ENCODE measurements at regions of chr15 and their contacts with region 1.

Region 1: GRCh38 chr15:82540055-82540983 is at the start of gene RPS17:
- DNase-seq: peak; percentile 96
- H3K4me3 ChIP-seq: peak within 1 kb of the TSS; percentile 94
- H3K27ac ChIP-seq: peak within 1 kb of the TSS; percentile 74
- H3K4me1 ChIP-seq: peaks cover 25% of the 10 kb centered on the region
- H3K27me3 ChIP-seq: no peaks in the 10 kb centered on the region
- total RNA-seq, gene RPS17: 1,721 and 1,890 TPM in 2 replicates

Region 2: DNA sequence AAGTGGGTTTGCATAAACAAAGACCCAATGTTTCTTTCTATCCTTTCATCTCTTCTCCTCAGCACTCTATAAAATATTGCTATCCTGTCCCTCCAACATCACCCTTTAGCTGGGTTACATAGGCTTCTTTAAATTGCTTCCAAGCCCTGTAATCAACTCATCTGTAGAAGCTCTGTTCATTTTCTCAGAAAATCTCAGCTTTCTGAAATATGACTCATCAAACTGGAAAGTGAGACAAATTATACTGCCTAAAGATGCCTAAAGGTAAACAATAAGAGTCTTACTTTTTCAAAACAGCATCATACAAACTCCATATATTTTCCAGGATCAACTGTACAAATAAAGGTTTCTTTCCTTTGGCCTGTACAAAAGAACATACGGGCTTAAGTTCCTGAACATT is 311.6 kb before region 1 on chr15:
- in situ Hi-C with region 1: no loop called
- DNase-seq: peak; percentile 14
- H3K4me3 ChIP-seq: no peak overlapping the region
- H3K27ac ChIP-seq: no peak overlapping the region
- H3K4me1 ChIP-seq: 0 out of 2 replicates have a peak, but pooled peaks cover 5% of the 10 kb centered on the region
- H3K27me3 ChIP-seq: no peaks in the 10 kb centered on the region

Region 3: GRCh38 chr15:82809404-82810060 is 269.2 kb after region 1 on chr15 and contains the start of gene WHAMM:
- in situ Hi-C with region 1: no loop called
- DNase-seq: peak; percentile 99
- H3K4me3 ChIP-seq: peak within 1 kb of the TSS; percentile 91
- H3K27ac ChIP-seq: peak within 1 kb of the TSS; percentile 95
- H3K4me1 ChIP-seq: 0 out of 2 replicates have a peak, but pooled peaks cover 20% of the 10 kb centered on the region
- H3K27me3 ChIP-seq: no peaks in the 10 kb centered on the region
- total RNA-seq, gene WHAMM: 2.3 and 3.0 TPM in 2 replicates

Region 4: GRCh38 chr15:83011271-83012075 is 471.2 kb after region 1 on chr15 and contains the start of gene C15orf40:
- in situ Hi-C with region 1: loop called (anchors 25 kb)
- DNase-seq: peak; percentile 97
- H3K4me3 ChIP-seq: peak within 1 kb of the TSS; percentile 86
- H3K27ac ChIP-seq: peak within 1 kb of the TSS; percentile 55
- H3K4me1 ChIP-seq: peaks cover 21% of the 10 kb centered on the region
- H3K27me3 ChIP-seq: no peaks in the 10 kb centered on the region
- total RNA-seq, gene C15orf40: 15.8 and 21.8 TPM in 2 replicates

Region 5: DNA sequence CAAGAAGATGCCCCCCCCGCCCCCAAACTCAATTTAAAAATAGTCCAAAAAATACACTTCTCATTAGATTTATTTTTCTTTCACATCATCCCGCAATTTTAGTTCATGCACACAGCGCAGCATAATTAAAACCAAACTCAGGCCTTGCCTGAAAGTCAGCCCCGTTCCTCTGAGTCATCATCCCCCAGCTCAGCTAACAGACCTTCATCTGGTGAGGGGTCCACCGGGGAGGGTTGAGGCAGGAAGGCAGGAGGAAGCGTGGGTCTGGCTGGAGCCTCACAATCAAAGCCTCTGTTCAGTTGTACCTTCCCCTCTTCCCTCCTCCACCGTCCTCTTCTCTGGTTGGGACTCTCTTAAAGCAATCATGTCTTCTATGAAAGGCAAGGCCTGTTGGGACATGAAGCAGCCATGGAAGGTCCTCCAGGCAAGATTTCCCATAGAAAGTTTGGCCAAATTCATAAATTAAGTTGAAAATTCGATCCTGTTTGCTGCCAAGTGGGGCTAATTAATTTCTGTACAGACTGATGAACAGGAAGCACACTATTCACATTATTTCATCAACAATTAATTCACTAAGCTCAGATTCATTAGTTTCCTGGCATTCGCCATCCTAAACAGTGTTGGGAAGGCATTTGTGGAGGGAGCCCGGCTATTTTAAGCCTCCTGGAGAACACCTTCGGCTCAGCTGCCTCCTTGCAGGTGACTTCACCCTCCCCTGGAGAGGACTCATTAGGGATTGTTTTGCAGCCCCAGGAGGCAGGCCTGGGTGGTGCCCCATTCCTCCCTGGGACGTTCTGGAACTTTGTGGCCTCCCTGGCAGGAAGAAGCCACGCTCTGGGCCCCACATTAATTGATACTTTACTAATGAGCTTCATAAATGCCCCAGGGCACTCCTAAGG is 816.4 kb after region 1 on chr15:
- in situ Hi-C with region 1: no loop called
- DNase-seq: no peak
- H3K4me3 ChIP-seq: no peak overlapping the region
- H3K27ac ChIP-seq: no peak overlapping the region
- H3K4me1 ChIP-seq: no peaks in the 10 kb centered on the region
- H3K27me3 ChIP-seq: no peaks in the 10 kb centered on the region